Activated CD8-positive, alpha-beta T cell treated with anti-CD3 and anti-CD28 coated beads for 36 hours (primary cell): ENCODE measurements at regions of chrX and their contacts with region 1.

Region 1: GRCh38 chrX:76454456-76454927 is 27.0 kb downstream of the MAGEE1 start:
- DNase-seq: no peak
- ATAC-seq: peak; percentile 77
- H3K4me3 Mint-ChIP-seq: no peak overlapping the region
- H3K27ac Mint-ChIP-seq: no peak overlapping the region
- H3K4me1 Mint-ChIP-seq: peaks cover 2% of the 10 kb centered on the region
- H3K27me3 Mint-ChIP-seq: no peaks in the 10 kb centered on the region
- CTCF ChIP-seq: peak; percentile 44

Region 2: DNA sequence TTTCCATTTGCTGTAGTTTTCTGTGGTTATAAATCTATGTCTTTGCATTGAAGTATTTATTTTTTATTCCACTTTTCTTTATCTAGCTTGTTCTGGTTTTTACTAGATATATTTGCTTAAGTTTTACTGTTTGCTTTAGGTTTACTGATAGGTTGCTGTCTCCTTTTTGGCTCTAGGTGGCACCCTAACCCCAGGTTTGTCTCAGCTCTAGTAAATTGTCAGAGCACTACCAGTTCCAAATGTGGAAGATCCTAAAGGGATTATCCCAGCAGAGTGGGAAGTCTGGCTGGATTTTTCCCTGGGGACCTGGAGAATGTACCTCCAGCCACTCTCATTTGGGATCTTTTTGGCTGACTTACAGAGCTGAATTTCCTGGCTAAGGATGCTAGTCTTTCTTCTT is 175.5 kb before region 1 on chrX:
- CTCF ChIA-PET with region 1: interaction called, 46 read pairs
- POLR2A ChIA-PET with region 1: no interaction called
- intact Hi-C with region 1: loop called (anchors 2 kb)
- DNase-seq: peak; percentile 57
- ATAC-seq: no peak
- H3K4me3 Mint-ChIP-seq: no peak overlapping the region
- H3K27ac Mint-ChIP-seq: no peak overlapping the region
- H3K4me1 Mint-ChIP-seq: no peaks in the 10 kb centered on the region
- H3K27me3 Mint-ChIP-seq: no peaks in the 10 kb centered on the region
- CTCF ChIP-seq: peak; percentile 50